Colonic mucosa (tissue), 4 donors: ENCODE measurements at regions of chr16 and their contacts with region 1.

Region 1: GRCh38 chr16:12178251-12178990 is 201.9 kb downstream of the SNX29 start:
- DNase-seq: no peak
- H3K4me3 ChIP-seq: no peak overlapping the region
- H3K27ac ChIP-seq: no peak overlapping the region
- H3K4me1 ChIP-seq: no peaks in the 10 kb centered on the region
- H3K27me3 ChIP-seq: no peaks in the 10 kb centered on the region
- CTCF ChIP-seq: no peak

Region 2: GRCh38 chr16:12057266-12057665 is 121.2 kb before region 1 on chr16:
- intact Hi-C with region 1: no loop called
- DNase-seq: no peak
- H3K4me3 ChIP-seq: no peak overlapping the region
- H3K27ac ChIP-seq: no peak overlapping the region
- H3K4me1 ChIP-seq: no peaks in the 10 kb centered on the region
- H3K27me3 ChIP-seq: no peaks in the 10 kb centered on the region
- CTCF ChIP-seq: no peak

Region 3: GRCh38 chr16:12119562-12119961 is 58.9 kb before region 1 on chr16:
- intact Hi-C with region 1: loop called (anchors 10 kb)
- DNase-seq: no peak
- H3K4me3 ChIP-seq: no peak overlapping the region
- H3K27ac ChIP-seq: no peak overlapping the region
- H3K4me1 ChIP-seq: no peaks in the 10 kb centered on the region
- H3K27me3 ChIP-seq: no peaks in the 10 kb centered on the region
- CTCF ChIP-seq: no peak

Region 4: DNA sequence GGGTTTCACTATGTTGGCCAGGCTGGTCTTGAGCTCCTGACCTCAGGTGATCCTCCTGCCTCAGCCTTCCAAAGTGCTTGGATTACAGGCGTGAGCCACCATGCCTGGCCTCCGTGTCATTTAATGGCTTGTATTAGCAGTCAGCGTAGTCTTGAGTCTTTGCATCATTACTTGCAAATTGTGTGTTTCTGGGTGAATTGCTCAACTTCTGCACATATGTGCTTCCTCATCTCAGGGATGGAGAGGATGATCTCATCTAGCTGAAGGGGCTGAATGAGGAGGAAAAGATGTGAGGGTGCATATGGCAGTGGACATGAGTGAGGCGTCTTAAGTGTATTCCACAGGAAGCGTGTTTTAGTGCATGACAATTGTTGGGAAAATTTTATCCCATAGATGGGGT is 46.1 kb before region 1 on chr16:
- intact Hi-C with region 1: no loop called
- DNase-seq: no peak
- H3K4me3 ChIP-seq: no peak overlapping the region
- H3K27ac ChIP-seq: no peak overlapping the region
- H3K4me1 ChIP-seq: no peaks in the 10 kb centered on the region
- H3K27me3 ChIP-seq: no peaks in the 10 kb centered on the region
- CTCF ChIP-seq: no peak